Pancreas (tissue), 10 donors: ENCODE measurements at regions of chr3 and their contacts with region 1.

Region 1: GRCh38 chr3:136042608-136043221 is 77.2 kb downstream of the PPP2R3A start:
- DNase-seq: no peak
- ATAC-seq: peak in 2 of 4 donors; percentile 51 to 55
- H3K4me3 ChIP-seq: no peak overlapping the region
- H3K27ac ChIP-seq: no peak overlapping the region
- H3K4me1 ChIP-seq: no peaks in the 10 kb centered on the region
- H3K27me3 ChIP-seq: no peaks in the 10 kb centered on the region
- CTCF ChIP-seq: peak in 3 of 4 donors; percentile 26 to 52 (median 40)

Region 2: DNA sequence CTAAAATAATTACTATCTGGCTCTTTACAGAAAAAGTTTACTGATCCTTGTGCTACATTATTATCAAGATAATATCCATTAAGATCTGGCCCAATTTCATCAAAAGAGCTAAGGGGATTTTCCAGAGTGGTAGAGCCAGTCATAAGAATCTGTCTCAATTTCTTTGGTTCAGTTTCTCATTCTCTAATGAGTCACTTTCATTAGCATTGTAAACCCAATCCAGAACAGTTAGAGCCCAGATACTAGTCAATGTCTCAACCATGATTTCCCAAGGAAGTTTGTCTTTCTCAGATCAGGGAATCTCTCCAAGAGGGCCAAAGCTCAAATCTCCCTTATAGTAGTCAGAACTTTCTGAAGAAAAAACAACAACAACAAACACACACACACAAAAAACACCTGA is 208.2 kb before region 1 on chr3:
- intact Hi-C with region 1: no loop called
- DNase-seq: no peak
- ATAC-seq: no peak
- H3K4me3 ChIP-seq: no peak overlapping the region
- H3K27ac ChIP-seq: no peak overlapping the region
- H3K4me1 ChIP-seq: no peaks in the 10 kb centered on the region
- H3K27me3 ChIP-seq: no peaks in the 10 kb centered on the region
- CTCF ChIP-seq: no peak

Region 3: DNA sequence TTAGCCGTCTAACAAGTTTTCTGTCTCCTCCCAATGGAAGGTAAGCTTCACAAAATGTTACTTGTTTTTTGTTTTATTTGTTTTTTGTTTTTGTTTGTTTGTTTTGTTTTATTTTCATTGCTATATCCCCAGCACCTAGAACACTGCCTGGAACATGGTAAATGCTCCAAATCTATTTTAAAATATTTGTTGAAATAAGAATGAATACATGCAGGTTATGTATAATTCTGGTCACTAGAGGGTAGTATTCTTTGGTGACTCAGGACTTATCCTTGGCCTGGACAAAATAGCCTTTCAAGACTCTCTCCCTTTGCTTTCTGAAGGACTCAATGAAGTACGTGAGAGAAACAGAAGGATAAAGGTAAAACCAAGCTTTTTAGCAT is 124.1 kb before region 1 on chr3:
- intact Hi-C with region 1: loop called in 2 of 3 experiments (anchors 5 to 10 kb)
- DNase-seq: no peak
- ATAC-seq: peak in 3 of 4 donors; percentile 64 to 76 (median 73)
- H3K4me3 ChIP-seq: no peak overlapping the region
- H3K27ac ChIP-seq: no peak overlapping the region
- H3K4me1 ChIP-seq: no peaks in the 10 kb centered on the region
- H3K27me3 ChIP-seq: no peaks in the 10 kb centered on the region
- CTCF ChIP-seq: peak in 2 of 4 donors; percentile 17 to 35